ENCODE measurements at regions of chr12 and their contacts with region 1.

Region 1: GRCh38 chr12:107093417-107094182 is at the start of gene CRY1:
- DNase-seq: peak; percentile 83 to 97
- H3K4me3 ChIP-seq: peak within 1 kb of the TSS; percentile 87 to 95
- H3K27ac ChIP-seq: peak within 1 kb of the TSS; percentile 99
- H3K4me1 ChIP-seq: peaks cover 0 to 9% of the 10 kb centered on the region in 2 donors
- H3K27me3 ChIP-seq: no peaks in the 10 kb centered on the region
- CTCF ChIP-seq: no peak
- total RNA-seq, gene CRY1: 23.0 TPM

Region 2: GRCh38 chr12:106247674-106248311 is 845.8 kb before region 1 on chr12 and contains the start of gene CKAP4:
- intact Hi-C with region 1: loop called (anchors 5 kb)
- DNase-seq: peak in 1 of 2 donors; percentile 87
- H3K4me3 ChIP-seq: peak within 1 kb of the TSS; percentile 90 to 95
- H3K27ac ChIP-seq: peak within 1 kb of the TSS; percentile 97 to 99
- H3K4me1 ChIP-seq: peaks cover 3 to 24% of the 10 kb centered on the region in 2 donors
- H3K27me3 ChIP-seq: no peaks in the 10 kb centered on the region
- CTCF ChIP-seq: peak in 1 of 3 experiments; percentile 20
- total RNA-seq, gene CKAP4: 116 TPM

Region 3: GRCh38 chr12:106774005-106774807 is 319.4 kb before region 1 on chr12 and contains the start of gene RIC8B:
- intact Hi-C with region 1: loop called (anchors 2 kb)
- DNase-seq: peak; percentile 83 to 98
- H3K4me3 ChIP-seq: peak within 1 kb of the TSS; percentile 68 to 72
- H3K27ac ChIP-seq: peak within 1 kb of the TSS; percentile 95 to 98
- H3K4me1 ChIP-seq: peaks cover 0 to 26% of the 10 kb centered on the region in 2 donors
- H3K27me3 ChIP-seq: no peaks in the 10 kb centered on the region
- CTCF ChIP-seq: no peak
- total RNA-seq, gene RIC8B: 19.1 TPM

Region 4: DNA sequence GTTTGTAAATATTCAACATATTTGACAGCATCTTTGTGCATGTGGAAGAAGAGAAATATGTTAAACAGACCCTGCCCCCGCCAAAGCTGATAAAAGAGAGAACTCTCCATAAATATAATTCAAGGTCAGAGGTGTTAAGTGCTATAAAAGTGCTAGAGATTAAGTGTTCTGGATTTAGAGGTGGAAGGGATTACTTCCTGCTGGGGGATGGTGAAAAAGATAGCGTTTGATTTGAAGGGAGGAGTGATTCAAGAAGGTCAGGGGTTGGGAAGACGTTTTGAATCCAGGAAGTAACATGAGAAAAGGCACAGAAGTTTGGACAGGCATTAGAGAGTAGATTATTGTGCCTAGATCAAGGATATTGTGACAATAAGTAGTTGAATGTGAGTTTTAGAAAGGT is 288.9 kb before region 1 on chr12:
- intact Hi-C with region 1: no loop called
- DNase-seq: no peak
- H3K4me3 ChIP-seq: no peak overlapping the region
- H3K27ac ChIP-seq: no peak overlapping the region
- H3K4me1 ChIP-seq: no peaks in the 10 kb centered on the region
- H3K27me3 ChIP-seq: no peaks in the 10 kb centered on the region
- CTCF ChIP-seq: no peak

Region 5: GRCh38 chr12:106986625-106987430 is 106.8 kb before region 1 on chr12 and contains the start of gene MTERF2:
- intact Hi-C with region 1: loop called (anchors 2 kb)
- DNase-seq: peak; percentile 71 to 97
- H3K4me3 ChIP-seq: peak within 1 kb of the TSS; percentile 69 to 77
- H3K27ac ChIP-seq: peak within 1 kb of the TSS; percentile 91 to 93
- H3K4me1 ChIP-seq: peaks cover 12 to 16% of the 10 kb centered on the region in 2 donors
- H3K27me3 ChIP-seq: no peaks in the 10 kb centered on the region
- CTCF ChIP-seq: no peak
- total RNA-seq, gene MTERF2: 3.1 TPM

Region 6: GRCh38 chr12:107105410-107105703 is 11.8 kb after region 1 on chr12:
- intact Hi-C with region 1: loop called (anchors 1 kb)
- DNase-seq: no peak
- H3K4me3 ChIP-seq: no peak overlapping the region
- H3K27ac ChIP-seq: no peak overlapping the region
- H3K4me1 ChIP-seq: no peaks in the 10 kb centered on the region
- H3K27me3 ChIP-seq: no peaks in the 10 kb centered on the region
- CTCF ChIP-seq: no peak

Measured in ascending aorta (tissue), 2 donors.